ENCODE measurements at regions of chr12 and their contacts with region 1.

Region 1: GRCh38 chr12:6285063-6285477 is 25.4 kb upstream of the PLEKHG6 start:
- DNase-seq: peak; percentile 52 to 72 (median 69)
- H3K4me3 ChIP-seq: no peak overlapping the region
- H3K27ac ChIP-seq: no peak overlapping the region
- H3K4me1 ChIP-seq: peaks cover under 1% of the 10 kb centered on the region
- H3K27me3 ChIP-seq: no peaks in the 10 kb centered on the region
- CTCF ChIP-seq: peak; percentile 84 to 89 (median 85)
- EP300 ChIP-seq: no peak
- POLR2A ChIP-seq: no peak

Region 2: GRCh38 chr12:5996459-5996858 is 288.6 kb before region 1 on chr12:
- intact Hi-C with region 1: loop called in 1 of 4 experiments (anchors 10 kb)
- DNase-seq: no peak
- H3K4me3 ChIP-seq: no peak overlapping the region
- H3K27ac ChIP-seq: no peak overlapping the region
- H3K4me1 ChIP-seq: no peaks in the 10 kb centered on the region
- H3K27me3 ChIP-seq: no peaks in the 10 kb centered on the region
- CTCF ChIP-seq: no peak
- EP300 ChIP-seq: no peak
- POLR2A ChIP-seq: no peak

Region 3: DNA sequence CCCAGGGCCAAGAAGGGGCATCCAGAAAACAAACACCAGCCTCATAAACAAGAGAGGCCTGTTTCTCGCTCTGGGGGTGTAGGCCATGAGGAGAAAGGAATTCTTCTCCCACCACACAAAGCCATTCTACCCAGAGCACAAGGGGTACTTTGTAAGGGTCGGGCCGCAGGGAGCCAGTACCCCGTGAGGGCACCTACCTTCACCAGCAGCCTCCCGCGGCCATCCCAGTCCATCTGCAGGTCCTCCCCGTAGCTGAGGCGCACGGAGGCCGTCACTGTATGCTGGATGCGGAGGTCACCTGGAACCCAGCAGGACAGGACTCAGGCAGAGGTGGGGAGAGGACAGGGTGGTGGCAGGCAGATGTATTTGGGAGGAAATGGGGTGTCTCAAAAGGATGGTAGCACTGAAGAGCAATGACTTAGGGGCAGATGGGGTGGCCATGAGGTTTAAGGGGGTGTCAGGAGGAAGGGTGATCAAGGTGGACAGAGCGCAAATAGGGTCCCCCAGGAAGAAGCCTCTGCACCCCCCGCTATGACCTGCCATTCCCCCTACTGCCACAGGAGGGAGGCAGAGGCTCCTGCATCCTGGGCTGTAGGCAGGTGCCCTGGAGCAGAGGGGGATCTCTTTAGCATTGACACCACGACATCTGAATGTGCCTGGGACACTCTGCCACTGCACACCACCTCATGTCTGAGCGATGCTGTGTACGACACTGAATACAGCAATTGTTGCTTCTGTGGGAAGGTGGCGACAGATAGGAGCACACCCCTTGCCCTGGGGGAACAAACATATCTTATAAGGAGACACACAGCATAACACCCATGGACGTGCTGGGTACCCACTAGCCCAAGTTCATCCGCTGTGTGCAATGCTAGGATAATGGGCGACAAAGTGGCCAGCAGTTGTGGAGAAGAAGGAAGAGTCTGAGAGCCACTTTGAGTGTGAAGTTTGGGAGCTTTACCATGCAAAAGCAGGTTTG is 222.0 kb before region 1 on chr12:
- intact Hi-C with region 1: loop called (anchors 5 to 10 kb)
- DNase-seq: peak in 3 of 5 donors; percentile 34 to 48 (median 35)
- H3K4me3 ChIP-seq: no peak overlapping the region
- H3K27ac ChIP-seq: no peak overlapping the region
- H3K4me1 ChIP-seq: no peaks in the 10 kb centered on the region
- H3K27me3 ChIP-seq: no peaks in the 10 kb centered on the region
- CTCF ChIP-seq: peak; percentile 24 to 55 (median 52)
- EP300 ChIP-seq: no peak
- POLR2A ChIP-seq: no peak

Region 4: GRCh38 chr12:6195665-6196535 is 89.2 kb before region 1 on chr12:
- intact Hi-C with region 1: loop called in 1 of 4 experiments (anchors 2 kb)
- DNase-seq: peak; percentile 82 to 92 (median 89)
- H3K4me3 ChIP-seq: no peak overlapping the region
- H3K27ac ChIP-seq: peak overlapping the region in 1 of 2 donors; percentile 22
- H3K4me1 ChIP-seq: peaks cover 6% of the 10 kb centered on the region
- H3K27me3 ChIP-seq: no peaks in the 10 kb centered on the region
- CTCF ChIP-seq: peak; percentile 83 to 96 (median 95)
- EP300 ChIP-seq: no peak
- POLR2A ChIP-seq: no peak

Region 5: GRCh38 chr12:6528887-6529235 is 243.8 kb after region 1 on chr12:
- intact Hi-C with region 1: no loop called
- DNase-seq: no peak
- H3K4me3 ChIP-seq: no peak overlapping the region
- H3K27ac ChIP-seq: no peak overlapping the region
- H3K4me1 ChIP-seq: peaks cover 7% of the 10 kb centered on the region
- H3K27me3 ChIP-seq: no peaks in the 10 kb centered on the region
- CTCF ChIP-seq: no peak
- EP300 ChIP-seq: no peak
- POLR2A ChIP-seq: no peak

Measured in ovary (tissue), 10 donors.